PC-9 (cell line): ENCODE measurements at regions of chr10 and their contacts with region 1.

Region 1: GRCh38 chr10:102704915-102705314 is 9.3 kb downstream of the ARL3 start:
- DNase-seq: no peak
- H3K4me3 ChIP-seq: no peak overlapping the region
- H3K27ac ChIP-seq: no peak overlapping the region
- H3K4me1 ChIP-seq: no peaks in the 10 kb centered on the region
- H3K27me3 ChIP-seq: no peaks in the 10 kb centered on the region
- CTCF ChIP-seq: no peak

Region 2: DNA sequence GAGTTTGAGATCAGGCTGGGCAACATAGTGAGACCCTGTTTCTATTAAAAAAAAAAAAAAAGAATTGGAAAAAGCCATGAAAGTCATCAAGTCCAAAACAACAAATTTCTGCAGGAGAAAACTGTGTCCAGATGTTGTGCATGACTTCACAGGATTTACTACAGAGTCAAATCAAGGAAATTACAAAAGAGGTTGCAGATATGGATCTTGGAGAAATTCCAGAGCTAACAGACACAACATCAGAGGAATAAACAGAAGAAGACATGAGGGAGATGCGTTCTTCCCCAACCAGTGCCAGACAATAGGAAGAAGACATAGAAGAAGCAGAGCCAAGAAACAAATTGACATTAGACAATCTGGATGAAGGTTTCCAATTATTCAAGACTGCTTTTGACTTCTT is 837.0 kb before region 1 on chr10:
- CTCF ChIA-PET with region 1: no interaction called
- POLR2A ChIA-PET with region 1: no interaction called
- intact Hi-C with region 1: no loop called
- DNase-seq: no peak
- H3K4me3 ChIP-seq: no peak overlapping the region
- H3K27ac ChIP-seq: no peak overlapping the region
- H3K4me1 ChIP-seq: no peaks in the 10 kb centered on the region
- H3K27me3 ChIP-seq: no peaks in the 10 kb centered on the region
- CTCF ChIP-seq: no peak

Region 3: DNA sequence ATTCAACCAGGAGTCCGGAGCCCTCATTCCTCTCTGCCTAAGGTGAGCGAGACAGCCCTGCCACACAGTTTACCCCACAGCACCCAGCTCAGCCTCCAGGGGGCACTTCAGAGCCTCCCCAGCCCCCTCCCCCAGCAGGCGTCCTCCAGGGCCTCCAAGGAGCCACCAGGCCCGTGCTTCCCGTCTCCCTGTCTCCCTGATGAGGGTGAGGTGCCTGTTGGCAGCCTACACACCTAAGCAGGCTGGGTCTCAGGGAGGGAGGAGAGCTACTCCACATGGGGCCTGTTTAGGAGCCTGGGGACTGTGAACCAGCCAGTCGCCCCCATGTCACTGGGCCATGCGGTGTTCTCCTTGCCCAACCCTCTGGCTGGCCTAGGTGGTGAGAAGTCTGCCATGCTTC is 89.6 kb before region 1 on chr10:
- CTCF ChIA-PET with region 1: no interaction called
- POLR2A ChIA-PET with region 1: no interaction called
- intact Hi-C with region 1: no loop called
- DNase-seq: no peak
- H3K4me3 ChIP-seq: no peak overlapping the region
- H3K27ac ChIP-seq: no peak overlapping the region
- H3K4me1 ChIP-seq: no peaks in the 10 kb centered on the region
- H3K27me3 ChIP-seq: no peaks in the 10 kb centered on the region
- CTCF ChIP-seq: 0 out of 2 replicates have a peak, but pooled peaks have one; percentile 31

Region 4: DNA sequence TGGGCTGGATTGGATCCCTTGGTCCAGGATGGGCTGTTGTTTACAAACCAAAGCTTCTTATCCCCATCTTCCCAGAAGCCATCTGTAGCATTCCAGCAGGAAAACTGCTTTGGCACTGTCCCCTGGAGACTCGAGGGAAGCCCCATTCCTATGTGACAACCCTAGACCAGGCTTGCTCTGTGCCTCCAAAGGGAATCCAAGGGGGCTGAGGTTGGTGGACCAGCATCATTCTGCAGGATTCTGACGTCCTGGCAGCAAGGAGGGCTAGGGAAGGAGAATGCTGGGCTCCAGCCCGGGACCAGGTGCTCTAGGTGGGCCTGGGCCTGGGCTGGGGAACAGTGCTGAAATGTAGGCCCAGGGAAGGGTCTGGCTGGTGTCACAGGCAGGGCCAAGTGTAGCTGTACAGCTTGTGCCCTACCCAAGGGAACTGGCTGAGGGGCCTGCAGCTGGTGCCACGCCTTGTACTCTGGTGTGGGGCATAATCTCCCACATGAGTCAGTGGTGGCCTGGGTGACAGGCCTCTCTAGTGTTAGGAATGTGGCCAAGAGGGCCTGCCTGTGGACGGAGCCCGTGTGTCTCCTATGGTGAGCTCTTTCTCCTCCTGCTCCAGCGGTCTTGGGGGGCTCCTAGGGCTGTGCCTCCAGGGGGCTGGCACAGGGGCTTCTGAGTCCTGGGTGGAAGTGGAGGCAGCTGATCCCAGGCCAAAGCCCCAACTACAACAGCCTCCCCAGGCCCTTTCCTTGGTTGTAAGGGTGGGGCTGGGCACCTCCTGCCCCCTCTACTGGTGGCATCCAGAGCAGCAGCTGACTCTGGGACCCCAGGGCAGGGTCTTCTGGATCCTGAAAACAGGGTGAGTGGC is 35.5 kb before region 1 on chr10:
- CTCF ChIA-PET with region 1: interaction called, 11 read pairs
- POLR2A ChIA-PET with region 1: no interaction called
- intact Hi-C with region 1: no loop called
- DNase-seq: peak; percentile 59 to 61
- H3K4me3 ChIP-seq: no peak overlapping the region
- H3K27ac ChIP-seq: no peak overlapping the region
- H3K4me1 ChIP-seq: peaks cover 9% of the 10 kb centered on the region; the same call in 1 of the 2 replicates
- H3K27me3 ChIP-seq: no peaks in the 10 kb centered on the region
- CTCF ChIP-seq: peak; percentile 59